HepG2 (cell line): ENCODE measurements at regions of chr5 and their contacts with region 1.

Region 1: DNA sequence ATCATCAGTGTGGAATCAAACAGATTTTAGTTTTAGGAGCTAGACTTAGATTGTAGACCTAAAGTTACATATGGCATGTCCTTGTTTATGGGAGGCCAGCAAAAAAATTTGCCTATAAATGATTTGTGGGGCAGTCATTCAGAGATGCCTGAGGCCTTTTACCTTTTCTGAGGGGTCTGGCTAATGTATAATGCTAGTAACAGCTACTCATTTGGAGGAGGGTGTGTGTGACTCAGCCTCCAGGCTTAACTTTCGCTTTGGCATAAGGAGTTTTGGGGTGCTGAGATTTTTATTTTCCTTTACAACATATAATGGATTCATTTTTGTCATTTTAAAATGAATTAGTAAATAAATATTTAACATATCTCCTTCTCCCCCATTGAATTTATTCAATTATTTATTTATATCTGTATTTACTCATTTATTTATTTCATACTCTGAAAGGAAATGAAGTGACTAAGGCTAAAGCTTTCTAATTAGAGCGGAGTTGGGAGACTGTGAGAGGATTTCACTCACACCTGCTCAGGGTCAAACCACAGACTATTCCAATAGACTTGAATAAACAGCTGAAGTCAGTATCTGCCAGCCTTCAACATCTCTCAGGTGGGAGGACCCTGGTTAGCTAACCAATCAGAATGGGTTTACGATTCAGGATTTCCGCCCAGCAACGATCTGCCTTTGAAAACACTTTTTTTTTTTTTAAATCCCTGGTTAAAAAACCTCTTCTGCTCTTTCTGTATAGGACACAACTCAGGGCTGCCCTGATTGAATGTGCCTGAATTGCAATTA is 487.5 kb upstream of the SGCD start:
- DNase-seq: no peak
- ATAC-seq: no peak
- H3K4me3 ChIP-seq: no peak overlapping the region
- H3K27ac ChIP-seq: no peak overlapping the region
- H3K4me1 ChIP-seq: no peaks in the 10 kb centered on the region
- H3K27me3 ChIP-seq: no peaks in the 10 kb centered on the region
- CTCF ChIP-seq: no peak
- EP300 ChIP-seq: no peak
- POLR2A ChIP-seq: no peak
- RAD21 ChIP-seq: no peak

Region 2: DNA sequence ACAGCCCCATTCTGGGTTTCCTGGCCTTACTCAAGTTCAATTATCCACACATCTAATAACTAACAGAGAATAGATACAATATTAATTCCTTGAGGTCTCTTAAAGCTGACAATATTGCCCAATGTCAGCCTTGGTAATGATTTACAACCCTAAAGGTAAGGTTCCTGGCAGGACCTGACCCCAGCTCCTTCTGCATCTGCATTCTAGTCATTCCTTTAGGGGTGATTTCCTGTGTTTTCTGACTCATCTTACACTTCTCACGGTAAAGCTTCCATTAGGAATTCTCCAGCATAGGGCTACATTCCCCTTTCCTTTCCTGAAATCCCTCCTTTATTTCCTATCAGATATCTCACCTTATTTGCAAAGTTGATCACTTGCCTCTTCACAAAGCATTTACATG is 1210.2 kb after region 1 on chr5:
- CTCF ChIA-PET with region 1: no interaction called
- POLR2A ChIA-PET with region 1: no interaction called
- in situ Hi-C with region 1: no loop called
- intact Hi-C with region 1: loop called (anchors 5 kb)
- DNase-seq: peak; percentile 76
- ATAC-seq: peak; percentile 73
- H3K4me3 ChIP-seq: no peak overlapping the region
- H3K27ac ChIP-seq: peak overlapping the region; percentile 37
- H3K4me1 ChIP-seq: peaks cover 66% of the 10 kb centered on the region
- H3K27me3 ChIP-seq: no peaks in the 10 kb centered on the region
- CTCF ChIP-seq: no peak
- EP300 ChIP-seq: peak in 1 of 2 experiments; percentile 67; a peak in 1 of 4 replicates
- POLR2A ChIP-seq: no peak
- RAD21 ChIP-seq: no peak